PC-9 (cell line): ENCODE measurements at regions of chr7 and their contacts with region 1.

Region 1: GRCh38 chr7:30911561-30911969 is at the start of gene AQP1:
- DNase-seq: no peak
- H3K4me3 ChIP-seq: no peak within 1 kb of the TSS
- H3K27ac ChIP-seq: no peak within 1 kb of the TSS
- H3K4me1 ChIP-seq: peaks cover 34% of the 10 kb centered on the region
- H3K27me3 ChIP-seq: no peaks in the 10 kb centered on the region
- CTCF ChIP-seq: no peak
- total RNA-seq, gene AQP1: 4.0 and 4.8 TPM in 2 replicates

Region 2: DNA sequence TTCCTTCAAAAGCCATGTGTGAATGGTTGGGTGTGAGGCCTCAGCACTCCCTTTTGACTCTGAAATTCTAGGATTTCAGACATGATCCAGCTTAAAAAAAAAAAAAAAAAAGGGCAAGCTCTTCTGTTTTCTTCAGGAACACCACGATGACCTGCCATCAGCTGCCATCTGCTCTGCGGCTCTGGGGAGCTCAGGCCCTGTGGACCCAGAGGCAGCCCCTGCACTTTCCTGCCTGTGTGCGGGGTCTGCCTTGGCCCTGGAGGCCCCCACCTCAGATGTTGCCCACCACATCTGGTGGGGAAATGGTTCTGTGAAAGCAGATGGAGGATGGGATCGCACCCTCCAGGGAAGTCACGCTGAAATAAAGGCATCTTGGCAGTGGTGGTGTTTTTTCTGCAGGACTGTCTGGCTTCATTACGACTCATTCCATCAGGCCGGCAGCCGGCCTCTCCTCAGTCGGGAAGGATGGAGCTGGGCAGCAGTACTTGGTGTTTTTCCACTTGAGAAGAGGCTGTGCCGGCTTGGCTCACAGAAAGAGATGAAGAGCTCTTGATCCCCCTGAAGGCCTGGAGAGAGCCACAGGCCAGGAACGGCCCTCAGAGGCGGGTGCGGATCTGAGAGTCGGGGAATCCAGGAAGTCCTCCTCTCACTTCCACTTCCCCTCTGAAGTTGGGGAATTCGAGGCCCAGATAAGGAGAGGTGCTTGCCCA is 66.0 kb before region 1 on chr7:
- CTCF ChIA-PET with region 1: no interaction called
- POLR2A ChIA-PET with region 1: no interaction called
- intact Hi-C with region 1: loop called (anchors 5 kb)
- DNase-seq: peak; percentile 19 to 62
- H3K4me3 ChIP-seq: no peak overlapping the region
- H3K27ac ChIP-seq: peak overlapping the region; percentile 66
- H3K4me1 ChIP-seq: peaks cover 20% of the 10 kb centered on the region
- H3K27me3 ChIP-seq: no peaks in the 10 kb centered on the region
- CTCF ChIP-seq: no peak

Region 3: GRCh38 chr7:30859940-30860496 is 51.5 kb before region 1 on chr7:
- CTCF ChIA-PET with region 1: no interaction called
- POLR2A ChIA-PET with region 1: no interaction called
- intact Hi-C with region 1: loop called (anchors 1 kb)
- DNase-seq: peak; percentile 53 to 94
- H3K4me3 ChIP-seq: no peak overlapping the region
- H3K27ac ChIP-seq: peak overlapping the region; percentile 55
- H3K4me1 ChIP-seq: peaks cover 26% of the 10 kb centered on the region
- H3K27me3 ChIP-seq: no peaks in the 10 kb centered on the region
- CTCF ChIP-seq: no peak